Panc1 (cell line): ENCODE measurements at regions of chr14 and their contacts with region 1.

Region 1: GRCh38 chr14:45134051-45134958 is at the start of gene FKBP3:
- DNase-seq: peak; percentile 89
- ATAC-seq: peak; percentile 96
- H3K4me3 ChIP-seq: peak within 1 kb of the TSS; percentile 71 to 88
- H3K27ac ChIP-seq: peak within 1 kb of the TSS; percentile 96
- H3K4me1 ChIP-seq: peaks cover 4% of the 10 kb centered on the region; the same call in 1 of the 2 replicates
- H3K27me3 ChIP-seq: no peaks in the 10 kb centered on the region
- CTCF ChIP-seq: peak; percentile 44
- total RNA-seq, gene FKBP3: 47.4 TPM

Region 2: DNA sequence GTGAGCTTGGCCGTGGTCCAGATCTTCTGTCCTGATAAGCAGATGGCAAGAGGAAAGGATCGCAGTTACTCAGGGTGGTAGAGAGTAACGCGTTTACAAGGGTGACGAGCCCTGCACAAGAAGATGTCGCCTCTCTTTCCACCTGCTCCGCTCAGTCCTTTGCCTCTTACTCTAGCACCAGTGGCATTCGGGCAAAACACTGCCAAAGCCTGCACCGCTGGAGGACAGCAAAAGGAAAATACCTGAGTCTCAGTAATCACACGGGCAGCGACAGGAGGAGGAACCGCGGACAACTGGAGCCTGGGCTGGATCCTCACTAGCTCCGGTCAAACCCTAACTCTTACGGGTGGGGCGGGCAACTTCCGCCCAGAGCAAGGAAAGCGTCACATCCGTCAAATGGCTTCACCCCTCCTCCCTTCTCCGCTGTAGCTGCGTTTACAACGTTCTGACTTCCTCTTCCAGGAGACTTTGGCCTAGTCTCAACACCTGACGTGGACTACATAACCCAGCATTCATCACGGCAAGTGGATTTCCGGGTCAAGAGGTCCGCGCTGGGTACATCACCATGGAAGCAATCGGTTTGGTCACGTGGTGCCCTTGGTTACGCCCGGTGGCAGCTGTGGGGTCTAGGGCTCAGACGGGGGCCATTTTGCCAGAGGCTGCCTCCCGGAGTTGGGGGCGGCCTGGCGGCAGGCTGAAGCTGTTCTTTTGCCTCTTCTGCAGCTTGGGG is 172.5 kb before region 1 on chr14 and contains the starts of genes KLHL28 and TOGARAM1:
- CTCF ChIA-PET with region 1: no interaction called
- POLR2A ChIA-PET with region 1: no interaction called
- in situ Hi-C with region 1: no loop called
- intact Hi-C with region 1: loop called (anchors 10 kb)
- DNase-seq: peak; percentile 98
- ATAC-seq: peak; percentile 95
- H3K4me3 ChIP-seq: peak within 1 kb of the TSS; percentile 77 to 93
- H3K27ac ChIP-seq: peak within 1 kb of the TSS; percentile 92
- H3K4me1 ChIP-seq: peaks cover 9% of the 10 kb centered on the region; the same call in 1 of the 2 replicates
- H3K27me3 ChIP-seq: no peaks in the 10 kb centered on the region
- CTCF ChIP-seq: no peak
- total RNA-seq, gene KLHL28: 7.2 TPM
- total RNA-seq, gene TOGARAM1: 11.6 TPM

Region 3: GRCh38 chr14:45253068-45253753 is 118.9 kb after region 1 on chr14 and contains the start of gene MIS18BP1:
- CTCF ChIA-PET with region 1: no interaction called
- POLR2A ChIA-PET with region 1: no interaction called
- in situ Hi-C with region 1: no loop called
- intact Hi-C with region 1: loop called (anchors 5 kb)
- DNase-seq: peak; percentile 69
- ATAC-seq: peak; percentile 94
- H3K4me3 ChIP-seq: peak within 1 kb of the TSS; percentile 77 to 83
- H3K27ac ChIP-seq: peak within 1 kb of the TSS; percentile 98
- H3K4me1 ChIP-seq: peaks cover 7% of the 10 kb centered on the region
- H3K27me3 ChIP-seq: no peaks in the 10 kb centered on the region
- CTCF ChIP-seq: peak; percentile 85
- total RNA-seq, gene MIS18BP1: 21.1 TPM